ENCODE measurements at regions of chr3 and their contacts with region 1.

Region 1: GRCh38 chr3:135007607-135008006 is 212.5 kb downstream of the EPHB1 start:
- DNase-seq: no peak
- H3K4me3 ChIP-seq: no peak overlapping the region
- H3K27ac ChIP-seq: no peak overlapping the region
- H3K4me1 ChIP-seq: peaks cover 0 to 11% of the 10 kb centered on the region in 2 donors
- H3K27me3 ChIP-seq: no peaks in the 10 kb centered on the region
- CTCF ChIP-seq: no peak
- POLR2A ChIP-seq: no peak

Region 2: DNA sequence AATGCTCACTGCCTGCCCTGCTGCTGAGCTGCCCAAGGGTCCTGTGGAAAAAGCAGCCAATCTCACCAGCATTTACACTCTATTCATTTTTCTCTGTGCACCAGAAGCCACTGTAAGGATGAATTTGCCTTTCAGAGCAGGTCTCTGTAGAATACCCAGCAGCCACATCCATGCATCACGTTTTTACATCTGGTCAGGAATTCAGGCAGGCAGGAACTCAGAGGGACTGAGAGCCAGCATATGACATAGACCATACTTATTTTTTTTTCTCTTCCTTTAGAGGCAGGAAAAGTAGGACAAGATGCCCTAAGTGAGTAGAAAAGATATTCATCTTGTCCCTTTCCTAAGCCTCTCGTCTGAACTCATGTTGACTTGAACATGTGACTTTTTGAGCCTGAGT is 80.2 kb after region 1 on chr3:
- intact Hi-C with region 1: loop called (anchors 2 kb)
- DNase-seq: no peak
- H3K4me3 ChIP-seq: no peak overlapping the region
- H3K27ac ChIP-seq: no peak overlapping the region
- H3K4me1 ChIP-seq: peaks cover 24 to 41% of the 10 kb centered on the region in 2 donors
- H3K27me3 ChIP-seq: no peaks in the 10 kb centered on the region
- CTCF ChIP-seq: no peak
- POLR2A ChIP-seq: no peak